ENCODE measurements at regions of chr5 and their contacts with region 1.

Region 1: GRCh38 chr5:103232393-103232999 is 26.1 kb upstream of the MACIR start:
- DNase-seq: no peak
- H3K4me3 ChIP-seq: no peak overlapping the region
- H3K27ac ChIP-seq: no peak overlapping the region
- H3K4me1 ChIP-seq: no peaks in the 10 kb centered on the region
- H3K27me3 ChIP-seq: no peaks in the 10 kb centered on the region
- CTCF ChIP-seq: peak; percentile 74

Region 2: GRCh38 chr5:103526164-103526915 is 293.8 kb after region 1 on chr5:
- CTCF ChIA-PET with region 1: no interaction called
- POLR2A ChIA-PET with region 1: interaction called, 14 read pairs
- intact Hi-C with region 1: no loop called
- DNase-seq: no peak
- H3K4me3 ChIP-seq: no peak overlapping the region
- H3K27ac ChIP-seq: no peak overlapping the region
- H3K4me1 ChIP-seq: peaks cover 17% of the 10 kb centered on the region
- H3K27me3 ChIP-seq: no peaks in the 10 kb centered on the region
- CTCF ChIP-seq: no peak

Region 3: DNA sequence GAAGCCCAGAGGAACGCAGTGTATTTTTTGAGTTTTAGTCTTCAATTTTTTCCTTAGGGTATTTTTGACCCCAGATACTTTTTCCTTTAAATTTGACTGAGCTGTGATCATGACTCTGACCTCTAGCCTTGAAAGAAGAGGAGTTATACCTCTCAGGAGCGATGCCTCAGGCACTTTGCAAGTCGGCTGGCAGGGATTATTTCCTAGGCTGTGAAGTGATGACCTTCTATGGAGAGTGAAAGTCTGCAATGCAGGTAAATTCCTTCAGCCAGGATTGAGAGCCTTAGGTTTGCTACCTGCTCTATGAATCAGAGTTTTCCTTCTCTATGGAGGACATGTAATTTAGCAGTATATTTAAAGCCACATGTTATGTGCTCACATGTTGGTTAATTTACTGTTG is 340.9 kb after region 1 on chr5:
- CTCF ChIA-PET with region 1: no interaction called
- POLR2A ChIA-PET with region 1: no interaction called
- intact Hi-C with region 1: no loop called
- DNase-seq: no peak
- H3K4me3 ChIP-seq: no peak overlapping the region
- H3K27ac ChIP-seq: no peak overlapping the region
- H3K4me1 ChIP-seq: no peaks in the 10 kb centered on the region
- H3K27me3 ChIP-seq: no peaks in the 10 kb centered on the region
- CTCF ChIP-seq: no peak

Measured in PC-9 (cell line).